ENCODE measurements at regions of chr6 and their contacts with region 1.

Region 1: DNA sequence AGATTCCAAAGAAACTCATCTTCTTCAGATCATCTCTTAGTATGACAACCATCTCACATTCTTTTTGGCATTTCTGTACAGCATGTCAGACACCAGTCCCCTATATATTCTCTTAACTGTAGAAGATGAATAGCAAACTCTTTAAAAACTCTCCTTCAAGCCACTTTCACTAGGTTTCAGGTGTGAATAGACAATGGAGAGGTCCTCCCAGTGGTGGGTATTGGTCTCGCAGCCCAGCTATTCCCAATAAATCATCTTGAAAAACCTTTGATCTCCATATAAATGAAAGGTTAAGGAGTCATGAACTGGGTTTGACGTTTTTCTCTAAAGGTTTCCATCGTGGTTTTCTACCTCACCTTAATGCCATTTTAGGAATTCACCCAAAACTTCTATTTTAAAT is 180.0 kb downstream of the GJA1 start:
- DNase-seq: no peak
- H3K4me3 ChIP-seq: no peak overlapping the region
- H3K27ac ChIP-seq: no peak overlapping the region
- H3K4me1 ChIP-seq: no peaks in the 10 kb centered on the region
- H3K27me3 ChIP-seq: no peaks in the 10 kb centered on the region
- CTCF ChIP-seq: no peak

Region 2: DNA sequence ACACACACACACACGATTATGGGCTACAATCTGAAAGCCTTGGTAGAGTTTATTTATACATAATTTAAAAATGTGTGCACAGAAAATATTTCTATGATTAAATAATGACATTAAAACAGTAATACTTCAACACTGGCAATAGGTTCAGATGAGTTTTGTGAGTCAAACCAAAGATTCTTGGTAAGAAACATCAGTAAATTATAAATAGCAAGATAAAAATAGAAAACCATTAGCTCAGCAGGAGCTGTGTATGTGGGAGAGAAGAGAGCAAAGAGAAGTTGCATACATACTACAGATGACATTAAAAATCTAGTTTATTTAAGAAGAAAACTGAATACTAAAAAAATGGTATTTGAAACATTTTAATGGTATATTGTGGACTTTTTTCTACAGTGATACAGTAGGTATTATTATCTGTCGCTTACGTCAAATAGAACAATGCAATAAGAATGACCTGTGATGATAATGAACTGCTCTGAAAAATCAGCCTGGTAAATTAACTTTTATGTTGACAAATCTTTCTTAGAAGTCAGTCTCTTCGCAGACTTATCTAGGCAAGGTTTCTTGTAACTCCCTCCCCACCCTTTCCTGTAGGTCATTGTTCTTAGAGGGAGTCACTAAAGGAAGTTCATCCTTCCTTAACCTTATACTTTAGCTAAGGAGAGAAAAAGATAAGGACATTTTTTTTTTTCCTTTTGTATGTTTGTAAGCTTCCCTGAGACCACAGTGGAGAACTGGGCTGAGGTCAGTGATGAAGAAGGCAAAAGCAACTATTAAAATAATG is 30.7 kb before region 1 on chr6:
- intact Hi-C with region 1: loop called (anchors 2 kb)
- DNase-seq: no peak
- H3K4me3 ChIP-seq: no peak overlapping the region
- H3K27ac ChIP-seq: peak overlapping the region; percentile 57 to 69
- H3K4me1 ChIP-seq: peaks cover 0 to 15% of the 10 kb centered on the region in 2 donors
- H3K27me3 ChIP-seq: no peaks in the 10 kb centered on the region
- CTCF ChIP-seq: no peak

Region 3: DNA sequence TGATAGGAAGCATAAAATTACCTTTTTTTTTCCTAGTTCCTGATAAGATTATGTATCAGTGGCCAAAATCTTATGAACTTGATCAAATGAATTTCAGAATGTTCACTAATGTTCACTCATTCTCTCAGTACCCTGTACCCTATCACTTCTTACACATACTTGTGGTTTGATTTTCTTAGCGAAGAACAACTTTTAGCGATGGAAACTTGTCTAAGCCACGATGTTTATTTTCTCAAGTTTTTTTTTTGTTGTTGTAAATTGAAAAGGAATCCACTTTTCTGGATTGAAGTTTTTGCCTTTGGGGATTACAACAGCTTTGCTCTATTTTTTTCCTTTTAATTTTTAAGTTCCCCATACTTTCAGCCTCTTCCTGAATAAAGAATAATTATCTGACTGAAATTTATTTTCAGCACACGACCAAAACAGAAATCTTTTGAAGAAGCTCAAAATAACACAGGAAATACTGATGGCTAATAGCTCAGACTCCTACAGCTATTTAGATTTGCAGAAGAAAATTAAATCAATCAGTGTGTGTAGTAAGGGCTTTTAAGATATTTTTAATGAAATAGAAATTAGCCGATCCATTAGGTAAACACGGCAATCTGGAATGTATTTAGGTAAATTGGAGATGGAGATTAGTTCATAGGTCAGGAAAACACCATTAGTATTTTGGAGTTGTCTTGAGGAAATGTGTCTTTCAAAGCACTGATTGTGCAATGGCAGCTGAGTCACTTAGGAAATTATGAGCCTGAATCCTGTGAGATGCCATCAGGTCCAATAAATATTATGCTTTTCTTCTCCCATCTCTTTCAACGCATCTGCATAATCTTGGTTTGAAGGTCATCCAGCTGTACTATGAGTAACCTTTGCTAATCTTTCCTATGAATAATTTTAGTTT is 37.5 kb after region 1 on chr6:
- intact Hi-C with region 1: loop called (anchors 5 kb)
- DNase-seq: peak in 1 of 2 donors; percentile 79
- H3K4me3 ChIP-seq: no peak overlapping the region
- H3K27ac ChIP-seq: peak overlapping the region; percentile 30 to 59
- H3K4me1 ChIP-seq: peaks cover 0 to 10% of the 10 kb centered on the region in 2 donors
- H3K27me3 ChIP-seq: no peaks in the 10 kb centered on the region
- CTCF ChIP-seq: no peak

Region 4: GRCh38 chr6:121780325-121781313 is 165.1 kb after region 1 on chr6:
- intact Hi-C with region 1: loop called (anchors 5 kb)
- DNase-seq: peak; percentile 50 to 94
- H3K4me3 ChIP-seq: no peak overlapping the region
- H3K27ac ChIP-seq: peak overlapping the region; percentile 73 to 75
- H3K4me1 ChIP-seq: peaks cover 0 to 19% of the 10 kb centered on the region in 2 donors
- H3K27me3 ChIP-seq: no peaks in the 10 kb centered on the region
- CTCF ChIP-seq: no peak

Region 5: GRCh38 chr6:122033539-122034181 is 418.2 kb after region 1 on chr6:
- intact Hi-C with region 1: loop called (anchors 10 kb)
- DNase-seq: no peak
- H3K4me3 ChIP-seq: no peak overlapping the region
- H3K27ac ChIP-seq: no peak overlapping the region
- H3K4me1 ChIP-seq: peaks cover 0 to 2% of the 10 kb centered on the region in 2 donors
- H3K27me3 ChIP-seq: no peaks in the 10 kb centered on the region
- CTCF ChIP-seq: peak; percentile 60 to 71 (median 66)

Measured in ascending aorta (tissue), 2 donors.